HCT116 (cell line): ENCODE measurements at regions of chr1 and their contacts with region 1.

Region 1: GRCh38 chr1:5594056-5594956 is 397.9 kb downstream of the NPHP4 start:
- DNase-seq: no peak
- ATAC-seq: no peak
- H3K4me3 ChIP-seq: no peak overlapping the region
- H3K27ac ChIP-seq: no peak overlapping the region
- H3K4me1 ChIP-seq: no peaks in the 10 kb centered on the region
- H3K27me3 ChIP-seq: peaks cover 13% of the 10 kb centered on the region; the same call in 1 of the 2 replicates
- CTCF ChIP-seq: no peak
- POLR2A ChIP-seq: no peak
- RAD21 ChIP-seq: no peak

Region 2: DNA sequence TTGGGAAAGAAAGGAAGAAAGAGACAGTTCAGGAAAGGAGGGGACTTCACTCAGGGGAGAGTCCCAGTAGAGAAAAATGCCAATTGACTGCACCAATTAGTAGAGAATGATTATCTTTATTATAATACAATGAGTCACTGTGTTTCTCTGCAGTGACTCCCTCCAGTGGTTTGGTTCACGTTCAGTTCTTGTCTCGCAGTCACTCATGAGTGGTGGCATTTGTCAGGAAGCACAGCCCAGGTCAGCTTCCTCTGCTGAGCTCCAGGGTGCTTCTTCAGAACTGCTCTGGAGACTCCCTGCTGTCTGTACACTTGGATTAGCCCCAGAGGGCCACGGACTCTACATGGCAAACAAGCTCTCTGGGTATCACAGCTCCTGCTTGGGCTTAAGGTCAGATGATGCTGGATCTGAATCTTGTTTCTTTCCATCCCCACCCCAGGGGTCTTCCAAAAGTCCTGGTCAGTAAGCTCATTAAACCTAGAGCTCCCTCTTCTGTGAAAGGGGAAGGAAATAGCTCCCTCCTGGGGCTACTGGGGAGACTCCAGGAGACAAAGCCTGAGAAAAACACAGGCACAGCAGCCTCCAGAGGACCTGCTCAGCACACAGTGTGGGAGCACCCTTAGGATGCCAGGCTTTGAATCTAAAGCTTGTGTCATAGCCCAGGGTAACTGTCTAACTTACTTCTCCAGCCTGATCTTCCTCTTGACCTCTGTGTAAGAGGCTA is 320.9 kb before region 1 on chr1:
- CTCF ChIA-PET with region 1: no interaction called
- POLR2A ChIA-PET with region 1: no interaction called
- RAD21 ChIA-PET with region 1: no interaction called
- intact Hi-C with region 1: no loop called
- DNase-seq: no peak
- ATAC-seq: no peak
- H3K4me3 ChIP-seq: no peak overlapping the region
- H3K27ac ChIP-seq: no peak overlapping the region
- H3K4me1 ChIP-seq: no peaks in the 10 kb centered on the region
- H3K27me3 ChIP-seq: no peaks in the 10 kb centered on the region
- CTCF ChIP-seq: no peak
- POLR2A ChIP-seq: no peak
- RAD21 ChIP-seq: no peak

Region 3: GRCh38 chr1:5548261-5548660 is 46.0 kb before region 1 on chr1:
- CTCF ChIA-PET with region 1: no interaction called
- POLR2A ChIA-PET with region 1: no interaction called
- RAD21 ChIA-PET with region 1: no interaction called
- intact Hi-C with region 1: loop called (anchors 5 kb)
- DNase-seq: no peak
- ATAC-seq: no peak
- H3K4me3 ChIP-seq: no peak overlapping the region
- H3K27ac ChIP-seq: no peak overlapping the region
- H3K4me1 ChIP-seq: peaks cover 0 to 7% of the 10 kb centered on the region in 2 experiments; a peak in 2 of 4 replicates
- H3K27me3 ChIP-seq: peaks cover 34% of the 10 kb centered on the region
- CTCF ChIP-seq: no peak
- POLR2A ChIP-seq: no peak
- RAD21 ChIP-seq: no peak